Dendritic cell treated with granulocyte-macrophage colony-stimulating factor and Interleukin-4, amounts not matched to agents 40 ng/mL and 50 ng/mL, for 4 days (primary cell): ENCODE measurements at regions of chr16 and their contacts with region 1.

Region 1: GRCh38 chr16:28069971-28070794 is 6.7 kb upstream of the GSG1L start:
- H3K4me3 Mint-ChIP-seq: no peak overlapping the region
- H3K27ac Mint-ChIP-seq: no peak overlapping the region
- H3K4me1 Mint-ChIP-seq: no peaks in the 10 kb centered on the region
- H3K27me3 Mint-ChIP-seq: peaks cover 17% of the 10 kb centered on the region

Region 2: GRCh38 chr16:27600381-27600780 is 469.8 kb before region 1 on chr16:
- intact Hi-C with region 1: loop called (anchors 2 kb)
- H3K4me3 Mint-ChIP-seq: no peak overlapping the region
- H3K27ac Mint-ChIP-seq: no peak overlapping the region
- H3K4me1 Mint-ChIP-seq: no peaks in the 10 kb centered on the region
- H3K27me3 Mint-ChIP-seq: no peaks in the 10 kb centered on the region